ENCODE measurements at regions of chr16 and their contacts with region 1.

Region 1: GRCh38 chr16:8868416-8869211 is at the start of gene CARHSP1:
- DNase-seq: peak; percentile 90
- H3K4me3 Mint-ChIP-seq: peak within 1 kb of the TSS; percentile 91
- H3K27ac Mint-ChIP-seq: peak within 1 kb of the TSS; percentile 78
- H3K4me1 Mint-ChIP-seq: peaks cover 44% of the 10 kb centered on the region
- H3K27me3 Mint-ChIP-seq: no peaks in the 10 kb centered on the region
- total RNA-seq, gene CARHSP1: 64.9 to 73.1 TPM

Region 2: GRCh38 chr16:8674413-8675022 is 194.1 kb before region 1 on chr16 and contains the start of gene ABAT:
- CTCF ChIA-PET with region 1: no interaction called
- POLR2A ChIA-PET with region 1: interaction called, 7 read pairs
- intact Hi-C with region 1: loop called (anchors 2 kb)
- DNase-seq: peak; percentile 93
- H3K4me3 Mint-ChIP-seq: peak within 1 kb of the TSS; percentile 79
- H3K27ac Mint-ChIP-seq: peak within 1 kb of the TSS; percentile 68
- H3K4me1 Mint-ChIP-seq: peaks cover 18% of the 10 kb centered on the region
- H3K27me3 Mint-ChIP-seq: no peaks in the 10 kb centered on the region
- total RNA-seq, gene ABAT: 8.7 to 10.0 TPM

Region 3: GRCh38 chr16:8818504-8819270 is 49.9 kb before region 1 on chr16:
- CTCF ChIA-PET with region 1: no interaction called
- POLR2A ChIA-PET with region 1: interaction called, 4 read pairs
- intact Hi-C with region 1: loop called (anchors 5 kb)
- DNase-seq: no peak
- H3K4me3 Mint-ChIP-seq: no peak overlapping the region
- H3K27ac Mint-ChIP-seq: no peak overlapping the region
- H3K4me1 Mint-ChIP-seq: peaks cover 26% of the 10 kb centered on the region
- H3K27me3 Mint-ChIP-seq: no peaks in the 10 kb centered on the region

Region 4: GRCh38 chr16:8885674-8886592 is 17.3 kb after region 1 on chr16:
- CTCF ChIA-PET with region 1: interaction called, 65 read pairs
- POLR2A ChIA-PET with region 1: interaction called, 15 read pairs
- intact Hi-C with region 1: loop called (anchors 1 kb)
- DNase-seq: peak; percentile 26
- H3K4me3 Mint-ChIP-seq: no peak overlapping the region
- H3K27ac Mint-ChIP-seq: no peak overlapping the region
- H3K4me1 Mint-ChIP-seq: peaks cover 20% of the 10 kb centered on the region
- H3K27me3 Mint-ChIP-seq: peaks cover 3% of the 10 kb centered on the region

Region 5: GRCh38 chr16:8920645-8921346 is 52.2 kb after region 1 on chr16:
- CTCF ChIA-PET with region 1: no interaction called
- POLR2A ChIA-PET with region 1: no interaction called
- intact Hi-C with region 1: loop called (anchors 2 kb)
- DNase-seq: no peak
- H3K4me3 Mint-ChIP-seq: no peak overlapping the region
- H3K27ac Mint-ChIP-seq: peak overlapping the region; percentile 78
- H3K4me1 Mint-ChIP-seq: peaks cover 74% of the 10 kb centered on the region
- H3K27me3 Mint-ChIP-seq: no peaks in the 10 kb centered on the region

Region 6: GRCh38 chr16:9072806-9073341 is 204.3 kb after region 1 on chr16:
- CTCF ChIA-PET with region 1: no interaction called
- POLR2A ChIA-PET with region 1: no interaction called
- intact Hi-C with region 1: loop called (anchors 5 kb)
- DNase-seq: peak; percentile 69
- H3K4me3 Mint-ChIP-seq: peak overlapping the region; percentile 46
- H3K27ac Mint-ChIP-seq: peak overlapping the region; percentile 92
- H3K4me1 Mint-ChIP-seq: peaks cover 46% of the 10 kb centered on the region
- H3K27me3 Mint-ChIP-seq: peaks cover 2% of the 10 kb centered on the region